IMR-90 (cell line): ENCODE measurements at regions of chr7 and their contacts with region 1.

Region 1: DNA sequence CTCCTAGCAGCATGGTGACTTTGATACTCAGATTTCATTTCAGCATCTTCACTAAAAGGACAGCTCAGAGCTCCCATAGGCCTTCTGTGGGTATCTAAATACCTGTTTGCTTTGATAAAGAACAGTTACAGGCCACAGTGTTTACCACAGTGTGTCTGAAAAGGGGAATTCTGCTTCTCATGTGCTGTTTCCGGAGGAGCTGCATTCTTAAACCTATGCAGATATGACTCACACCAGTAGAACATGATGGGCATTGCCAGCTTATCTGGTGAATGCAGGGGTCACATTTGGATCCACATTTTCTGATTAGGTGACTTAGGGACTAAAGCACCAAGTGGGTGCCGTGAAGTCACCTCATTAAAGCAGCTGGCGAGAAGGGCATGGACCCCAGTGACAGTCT is 52.6 kb downstream of the TRRAP start:
- DNase-seq: peak; percentile 34
- ATAC-seq: no peak
- H3K4me3 ChIP-seq: no peak overlapping the region
- H3K27ac ChIP-seq: no peak overlapping the region
- H3K4me1 ChIP-seq: no peaks in the 10 kb centered on the region; the same call in 1 of the 2 replicates
- H3K27me3 ChIP-seq: no peaks in the 10 kb centered on the region
- CTCF ChIP-seq: no peak
- POLR2A ChIP-seq: no peak
- RAD21 ChIP-seq: no peak

Region 2: GRCh38 chr7:98974906-98975816 is 44.2 kb after region 1 on chr7:
- CTCF ChIA-PET with region 1: no interaction called
- POLR2A ChIA-PET with region 1: no interaction called
- dilution Hi-C with region 1: no loop called
- in situ Hi-C with region 1: loop called (anchors 5 kb)
- intact Hi-C with region 1: no loop called
- DNase-seq: no peak
- ATAC-seq: no peak
- H3K4me3 ChIP-seq: no peak overlapping the region
- H3K27ac ChIP-seq: no peak overlapping the region
- H3K4me1 ChIP-seq: no peaks in the 10 kb centered on the region
- H3K27me3 ChIP-seq: no peaks in the 10 kb centered on the region
- CTCF ChIP-seq: no peak
- POLR2A ChIP-seq: no peak
- RAD21 ChIP-seq: no peak

Region 3: GRCh38 chr7:99090771-99091542 is 160.0 kb after region 1 on chr7:
- CTCF ChIA-PET with region 1: no interaction called
- POLR2A ChIA-PET with region 1: no interaction called
- dilution Hi-C with region 1: no loop called
- in situ Hi-C with region 1: no loop called
- intact Hi-C with region 1: no loop called
- DNase-seq: peak; percentile 20
- ATAC-seq: peak; percentile 56
- H3K4me3 ChIP-seq: no peak overlapping the region
- H3K27ac ChIP-seq: no peak overlapping the region
- H3K4me1 ChIP-seq: peaks cover 6% of the 10 kb centered on the region
- H3K27me3 ChIP-seq: no peaks in the 10 kb centered on the region
- CTCF ChIP-seq: no peak
- POLR2A ChIP-seq: no peak
- RAD21 ChIP-seq: no peak

Region 4: DNA sequence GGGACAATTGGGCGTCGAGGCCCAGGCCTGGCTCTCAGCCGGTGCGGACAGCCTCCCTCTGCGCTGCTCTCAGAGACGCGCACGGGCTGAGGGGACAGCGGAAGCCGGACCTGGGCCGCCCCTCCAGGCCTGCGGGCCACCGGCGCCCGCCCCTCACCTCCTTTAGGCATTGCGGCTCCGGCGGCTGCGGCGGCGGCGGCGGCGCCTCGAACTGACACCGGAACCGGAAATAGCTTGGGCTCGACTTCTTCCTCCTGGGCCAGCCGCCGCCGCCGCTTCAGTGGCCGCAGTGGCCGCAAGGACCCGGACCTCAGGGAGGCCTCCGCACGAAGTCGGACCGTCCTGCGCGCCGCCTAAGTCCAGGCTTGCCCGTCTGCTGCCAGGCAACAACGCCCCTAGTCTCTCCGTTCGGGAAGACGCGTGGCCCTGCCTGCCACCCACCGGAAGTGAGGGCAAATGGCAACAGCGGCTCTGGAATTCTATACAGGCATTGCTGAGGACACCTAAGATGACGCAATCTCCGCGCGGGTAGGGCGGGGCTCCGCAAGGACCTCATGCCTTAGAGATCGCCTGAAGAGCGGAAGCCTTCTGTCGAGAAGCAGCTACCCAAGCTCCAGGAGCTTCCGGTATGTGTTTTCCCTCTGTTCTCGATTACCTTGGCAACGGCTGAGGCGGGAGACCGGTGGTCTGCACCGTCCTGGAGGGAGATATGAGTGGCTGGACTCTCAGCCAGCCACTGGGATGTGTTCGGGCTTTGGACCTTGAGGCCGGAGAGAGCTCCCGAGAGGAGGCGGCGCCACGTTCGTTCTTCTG is 477.7 kb after region 1 on chr7 and contains the starts of genes BUD31 and PDAP1:
- CTCF ChIA-PET with region 1: no interaction called
- POLR2A ChIA-PET with region 1: no interaction called
- dilution Hi-C with region 1: no loop called
- in situ Hi-C with region 1: no loop called
- intact Hi-C with region 1: no loop called
- DNase-seq: peak; percentile 95
- ATAC-seq: peak; percentile 89
- H3K4me3 ChIP-seq: peak within 1 kb of the TSS; percentile 57
- H3K27ac ChIP-seq: peak within 1 kb of the TSS; percentile 99
- H3K4me1 ChIP-seq: peaks cover 8% of the 10 kb centered on the region; the same call in 1 of the 2 replicates
- H3K27me3 ChIP-seq: no peaks in the 10 kb centered on the region
- CTCF ChIP-seq: no peak
- POLR2A ChIP-seq: peak; percentile 95
- RAD21 ChIP-seq: no peak
- total RNA-seq, gene BUD31: 72.6 and 111 TPM in 2 replicates
- total RNA-seq, gene PDAP1: 40.3 and 124 TPM in 2 replicates

Region 5: DNA sequence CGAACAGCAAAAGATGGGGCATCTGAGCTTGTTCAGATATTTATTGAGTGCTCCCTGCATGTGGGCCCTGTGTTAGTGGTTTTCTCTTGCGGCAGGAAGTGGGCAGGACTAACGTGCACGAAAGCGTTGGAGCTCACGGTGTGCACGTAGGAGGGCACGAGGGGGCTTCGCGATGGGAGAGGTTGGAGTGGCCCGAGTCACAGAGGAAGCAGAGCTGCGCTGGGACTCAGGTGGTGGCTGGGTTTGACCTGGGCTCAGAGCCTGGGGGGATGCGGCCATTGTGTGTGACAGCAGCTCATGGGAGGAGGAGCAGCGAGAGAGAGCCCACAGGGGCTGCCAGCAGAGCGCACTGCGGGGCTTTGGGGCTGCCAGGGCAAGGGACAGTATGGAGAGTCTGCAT is 693.6 kb after region 1 on chr7:
- CTCF ChIA-PET with region 1: no interaction called
- POLR2A ChIA-PET with region 1: no interaction called
- dilution Hi-C with region 1: no loop called
- in situ Hi-C with region 1: no loop called
- intact Hi-C with region 1: no loop called
- DNase-seq: no peak
- ATAC-seq: no peak
- H3K4me3 ChIP-seq: no peak overlapping the region
- H3K27ac ChIP-seq: no peak overlapping the region
- H3K4me1 ChIP-seq: no peaks in the 10 kb centered on the region
- H3K27me3 ChIP-seq: no peaks in the 10 kb centered on the region
- CTCF ChIP-seq: no peak
- POLR2A ChIP-seq: no peak
- RAD21 ChIP-seq: no peak